ENCODE measurements at regions of chr1 and their contacts with region 1.

Region 1: GRCh38 chr1:102434421-102434820 is 437.7 kb upstream of the OLFM3 start:
- DNase-seq: peak; percentile 76
- H3K4me3 ChIP-seq: no peak overlapping the region
- H3K27ac ChIP-seq: no peak overlapping the region
- H3K4me1 ChIP-seq: no peaks in the 10 kb centered on the region
- H3K27me3 ChIP-seq: no peaks in the 10 kb centered on the region
- CTCF ChIP-seq: peak; percentile 81

Region 2: GRCh38 chr1:101309334-101310311 is 1124.8 kb before region 1 on chr1:
- CTCF ChIA-PET with region 1: no interaction called
- POLR2A ChIA-PET with region 1: no interaction called
- intact Hi-C with region 1: loop called (anchors 10 kb)
- DNase-seq: peak; percentile 66
- H3K4me3 ChIP-seq: peak overlapping the region; percentile 34
- H3K27ac ChIP-seq: no peak overlapping the region
- H3K4me1 ChIP-seq: peaks cover 4% of the 10 kb centered on the region
- H3K27me3 ChIP-seq: no peaks in the 10 kb centered on the region
- CTCF ChIP-seq: peak; percentile 93

Region 3: DNA sequence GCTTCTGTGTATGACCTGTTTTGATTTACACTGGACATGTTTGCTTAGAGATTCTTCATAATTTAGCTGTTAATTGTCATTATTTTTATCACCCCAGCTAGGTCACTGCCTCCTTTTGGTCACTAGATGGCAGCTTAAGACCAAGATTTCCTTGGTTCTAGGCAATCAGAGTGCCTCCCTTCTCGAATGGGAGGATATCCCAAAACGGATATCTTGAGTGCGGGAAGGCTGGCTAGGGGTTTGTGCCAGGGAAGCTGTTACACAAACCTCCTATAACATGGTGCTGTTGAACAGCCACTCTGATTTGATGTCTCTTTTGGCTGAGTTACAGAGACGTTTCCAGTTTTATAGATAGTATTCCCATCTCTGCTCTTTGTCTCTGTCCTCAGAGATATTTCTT is 914.1 kb before region 1 on chr1:
- CTCF ChIA-PET with region 1: interaction called, 3 read pairs
- POLR2A ChIA-PET with region 1: no interaction called
- intact Hi-C with region 1: loop called (anchors 1 kb)
- DNase-seq: peak; percentile 84
- H3K4me3 ChIP-seq: no peak overlapping the region
- H3K27ac ChIP-seq: no peak overlapping the region
- H3K4me1 ChIP-seq: peaks cover 2% of the 10 kb centered on the region
- H3K27me3 ChIP-seq: no peaks in the 10 kb centered on the region
- CTCF ChIP-seq: peak; percentile 90

Region 4: GRCh38 chr1:101653482-101653946 is 780.9 kb before region 1 on chr1:
- CTCF ChIA-PET with region 1: interaction called, 7 read pairs
- POLR2A ChIA-PET with region 1: no interaction called
- intact Hi-C with region 1: loop called (anchors 2 kb)
- DNase-seq: peak; percentile 78
- H3K4me3 ChIP-seq: no peak overlapping the region
- H3K27ac ChIP-seq: no peak overlapping the region
- H3K4me1 ChIP-seq: peaks cover 7% of the 10 kb centered on the region
- H3K27me3 ChIP-seq: no peaks in the 10 kb centered on the region
- CTCF ChIP-seq: peak; percentile 78

Region 5: GRCh38 chr1:101820071-101820470 is 614.4 kb before region 1 on chr1:
- CTCF ChIA-PET with region 1: no interaction called
- POLR2A ChIA-PET with region 1: no interaction called
- intact Hi-C with region 1: loop called (anchors 1 kb)
- DNase-seq: peak; percentile 89
- H3K4me3 ChIP-seq: no peak overlapping the region
- H3K27ac ChIP-seq: peak overlapping the region; percentile 12
- H3K4me1 ChIP-seq: peaks cover 61% of the 10 kb centered on the region
- H3K27me3 ChIP-seq: no peaks in the 10 kb centered on the region
- CTCF ChIP-seq: peak; percentile 85

Region 6: GRCh38 chr1:102186536-102186935 is 247.9 kb before region 1 on chr1:
- CTCF ChIA-PET with region 1: no interaction called
- POLR2A ChIA-PET with region 1: no interaction called
- intact Hi-C with region 1: loop called (anchors 1 kb)
- DNase-seq: peak; percentile 52
- H3K4me3 ChIP-seq: no peak overlapping the region
- H3K27ac ChIP-seq: peak overlapping the region; percentile 97
- H3K4me1 ChIP-seq: peaks cover 77% of the 10 kb centered on the region
- H3K27me3 ChIP-seq: no peaks in the 10 kb centered on the region
- CTCF ChIP-seq: no peak

Region 7: GRCh38 chr1:102191723-102192122 is 242.7 kb before region 1 on chr1:
- CTCF ChIA-PET with region 1: no interaction called
- POLR2A ChIA-PET with region 1: no interaction called
- intact Hi-C with region 1: loop called (anchors 2 kb)
- DNase-seq: peak; percentile 88
- H3K4me3 ChIP-seq: no peak overlapping the region
- H3K27ac ChIP-seq: no peak overlapping the region
- H3K4me1 ChIP-seq: peaks cover 29% of the 10 kb centered on the region
- H3K27me3 ChIP-seq: no peaks in the 10 kb centered on the region
- CTCF ChIP-seq: peak; percentile 78

Region 8: GRCh38 chr1:102531036-102531435 is 96.6 kb after region 1 on chr1:
- CTCF ChIA-PET with region 1: no interaction called
- POLR2A ChIA-PET with region 1: no interaction called
- intact Hi-C with region 1: no loop called
- DNase-seq: no peak
- H3K4me3 ChIP-seq: no peak overlapping the region
- H3K27ac ChIP-seq: no peak overlapping the region
- H3K4me1 ChIP-seq: no peaks in the 10 kb centered on the region
- H3K27me3 ChIP-seq: no peaks in the 10 kb centered on the region
- CTCF ChIP-seq: no peak

Region 9: DNA sequence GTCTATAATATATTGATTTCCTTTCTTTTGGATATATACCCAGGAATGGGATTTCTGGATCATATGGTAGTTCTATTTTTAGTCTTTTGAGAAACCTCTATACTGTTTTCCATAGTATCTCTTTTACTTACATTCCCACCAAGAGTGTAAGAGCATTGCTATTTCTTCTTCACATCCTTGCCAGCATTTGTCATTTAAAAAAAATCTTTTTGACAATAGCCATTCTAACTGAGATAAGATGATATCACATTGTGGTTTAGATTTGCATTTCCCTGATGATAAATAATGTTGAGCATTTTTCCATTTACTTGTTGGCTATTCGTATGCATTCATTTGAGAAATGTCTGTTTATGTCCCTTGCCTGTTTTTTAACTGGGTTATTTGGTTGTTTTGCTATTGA is 206.5 kb after region 1 on chr1:
- CTCF ChIA-PET with region 1: no interaction called
- POLR2A ChIA-PET with region 1: no interaction called
- intact Hi-C with region 1: no loop called
- DNase-seq: no peak
- H3K4me3 ChIP-seq: no peak overlapping the region
- H3K27ac ChIP-seq: no peak overlapping the region
- H3K4me1 ChIP-seq: no peaks in the 10 kb centered on the region
- H3K27me3 ChIP-seq: no peaks in the 10 kb centered on the region
- CTCF ChIP-seq: no peak

Region 10: GRCh38 chr1:103243481-103243880 is 809.1 kb after region 1 on chr1:
- CTCF ChIA-PET with region 1: no interaction called
- POLR2A ChIA-PET with region 1: no interaction called
- intact Hi-C with region 1: no loop called
- DNase-seq: no peak
- H3K4me3 ChIP-seq: no peak overlapping the region
- H3K27ac ChIP-seq: no peak overlapping the region
- H3K4me1 ChIP-seq: no peaks in the 10 kb centered on the region
- H3K27me3 ChIP-seq: no peaks in the 10 kb centered on the region
- CTCF ChIP-seq: no peak

Measured in A673 (cell line).